ENCODE measurements at regions of chr10 and their contacts with region 1.

Region 1: GRCh38 chr10:87861953-87862678 is 1.2 kb downstream of the KLLN start:
- DNase-seq: peak; percentile 98
- ATAC-seq: peak; percentile 94

Region 2: GRCh38 chr10:87804939-87805569 is 57.1 kb before region 1 on chr10:
- intact Hi-C with region 1: no loop called
- DNase-seq: no peak
- ATAC-seq: no peak

Region 3: DNA sequence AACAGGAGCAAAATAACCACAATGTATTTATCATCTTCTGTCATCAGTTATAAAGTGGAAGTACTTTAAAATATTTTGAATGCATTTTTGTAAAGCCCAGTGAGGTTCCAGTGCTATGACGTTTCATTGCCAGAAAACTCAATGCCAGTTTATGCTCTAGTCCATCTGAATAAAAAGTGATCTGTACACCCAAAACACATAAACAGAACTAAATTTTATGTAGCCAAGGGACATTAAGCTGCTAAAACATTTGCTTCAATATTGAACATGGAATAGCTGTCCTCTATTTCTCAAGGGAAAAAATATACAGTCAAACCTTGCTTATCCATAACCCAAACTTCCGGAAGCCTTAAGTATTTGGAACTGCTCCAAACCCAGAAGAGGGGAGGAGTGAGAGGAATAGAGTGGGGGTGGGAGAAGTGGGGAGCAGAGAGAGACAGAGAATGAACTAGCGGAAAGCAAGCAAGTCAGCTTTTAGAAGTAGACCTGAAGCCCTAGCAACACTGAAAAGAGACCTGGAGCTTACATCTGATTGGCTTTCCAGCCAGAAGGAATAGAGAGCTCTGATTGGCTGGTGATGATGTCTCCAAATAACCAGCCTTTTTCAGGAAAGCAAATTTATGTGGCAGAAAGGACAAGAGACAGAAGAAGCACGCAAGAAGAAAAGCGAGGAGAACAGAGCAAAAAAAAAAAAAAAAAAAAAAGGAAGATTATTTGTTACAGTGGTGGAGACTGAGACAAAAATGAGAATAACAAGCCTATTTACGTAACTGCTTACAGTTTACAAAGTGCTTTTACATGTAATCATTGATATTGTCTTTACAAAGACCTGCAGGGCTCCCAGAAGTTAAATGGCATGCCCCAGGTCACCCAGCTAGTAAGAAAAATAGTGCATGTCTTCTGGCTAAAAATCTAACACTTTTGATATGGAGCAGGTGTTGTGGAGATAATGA is 525.0 kb after region 1 on chr10:
- intact Hi-C with region 1: loop called (anchors 5 kb)
- DNase-seq: no peak
- ATAC-seq: peak; percentile 92